Right cardiac atrium (tissue), 5 donors: ENCODE measurements at regions of chr19 and their contacts with region 1.

Region 1: DNA sequence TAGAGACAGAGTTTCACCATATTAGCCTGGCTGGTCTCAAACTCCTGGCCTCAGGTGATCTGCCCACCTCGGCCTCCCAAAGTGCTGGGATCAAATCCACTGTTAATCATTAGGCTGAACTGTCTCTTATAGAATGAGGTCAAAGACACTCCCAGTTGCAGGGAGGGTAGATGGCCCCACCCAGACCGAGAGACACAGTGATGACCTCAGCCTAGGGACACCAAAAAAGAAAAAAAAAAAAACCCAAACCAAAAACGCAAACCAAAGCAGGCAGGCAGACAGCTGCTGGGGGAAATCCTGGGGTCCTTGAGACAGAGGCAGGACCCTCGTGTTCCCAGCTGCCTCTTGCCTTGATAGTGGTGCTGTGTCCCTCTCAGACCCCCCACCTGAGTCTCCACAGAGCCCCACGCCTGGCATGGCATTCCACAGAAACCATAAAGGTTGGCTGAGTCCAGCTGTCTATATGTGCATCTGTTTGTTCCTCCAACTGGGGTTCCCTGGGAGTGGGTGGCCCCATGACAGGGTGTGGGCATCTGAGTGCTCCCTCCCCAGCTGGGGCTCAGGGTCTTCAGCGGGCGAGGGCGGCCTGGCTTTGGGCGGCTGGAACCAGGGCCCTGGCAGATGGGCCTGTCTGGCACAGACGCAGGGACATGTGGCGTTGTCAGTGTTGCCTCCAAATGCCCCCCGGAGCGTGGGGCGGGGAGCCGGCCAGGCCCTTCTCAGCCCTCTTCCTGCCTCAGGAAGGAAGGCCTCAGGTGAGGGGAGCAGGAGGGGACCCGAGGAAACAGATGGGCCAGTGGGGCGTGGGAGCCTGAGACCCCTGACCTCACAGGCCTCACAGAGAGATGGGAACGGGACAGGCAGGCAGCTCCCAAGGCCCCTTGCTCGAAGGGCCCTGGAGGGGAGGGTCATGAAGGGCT is 5.2 kb downstream of the DAND5 start:
- DNase-seq: peak in 2 of 3 donors; percentile 34 to 57
- ATAC-seq: no peak
- H3K4me3 ChIP-seq: no peak overlapping the region
- H3K27ac ChIP-seq: no peak overlapping the region
- H3K4me1 ChIP-seq: no peaks in the 10 kb centered on the region
- H3K27me3 ChIP-seq: no peaks in the 10 kb centered on the region

Region 2: GRCh38 chr19:13262450-13262849 is 287.9 kb after region 1 on chr19:
- intact Hi-C with region 1: loop called in 2 of 4 experiments (anchors 5 to 10 kb)
- DNase-seq: no peak
- ATAC-seq: peak; percentile 67 to 75
- H3K4me3 ChIP-seq: no peak overlapping the region
- H3K27ac ChIP-seq: no peak overlapping the region
- H3K4me1 ChIP-seq: no peaks in the 10 kb centered on the region
- H3K27me3 ChIP-seq: no peaks in the 10 kb centered on the region

Region 3: GRCh38 chr19:13588957-13589833 is 614.6 kb after region 1 on chr19:
- intact Hi-C with region 1: loop called in 2 of 4 experiments (anchors 5 to 10 kb)
- DNase-seq: peak; percentile 68 to 88 (median 87)
- ATAC-seq: peak; percentile 81 to 84
- H3K4me3 ChIP-seq: no peak overlapping the region
- H3K27ac ChIP-seq: no peak overlapping the region
- H3K4me1 ChIP-seq: no peaks in the 10 kb centered on the region
- H3K27me3 ChIP-seq: no peaks in the 10 kb centered on the region